ENCODE measurements at regions of chr5 and their contacts with region 1.

Region 1: GRCh38 chr5:32489791-32490582 is 45.4 kb upstream of the ZFR start:
- ATAC-seq: peak; percentile 64 to 95 (median 86)
- H3K4me3 ChIP-seq: no peak overlapping the region
- H3K27ac ChIP-seq: peak overlapping the region in 1 of 2 donors; percentile 20
- H3K4me1 ChIP-seq: no peaks in the 10 kb centered on the region

Region 2: DNA sequence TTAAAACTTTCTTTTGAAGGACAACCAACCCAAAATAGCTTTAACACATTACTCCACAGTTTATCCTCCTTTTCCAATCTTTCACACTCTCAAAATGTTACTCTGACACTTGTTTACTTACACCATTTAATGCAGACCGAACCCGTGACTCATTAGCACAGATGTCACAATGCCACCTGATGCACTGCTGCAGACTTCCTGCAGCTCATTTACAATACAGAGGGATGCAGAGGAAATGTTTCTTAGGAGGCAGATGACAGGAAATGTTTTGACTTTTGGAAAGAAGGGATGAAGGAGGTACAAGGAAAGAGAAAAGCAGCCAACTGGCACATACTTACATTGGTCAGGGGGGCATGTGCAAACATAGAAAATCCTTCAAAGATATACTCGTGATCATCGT is 997.1 kb before region 1 on chr5:
- in situ Hi-C with region 1: no loop called
- ATAC-seq: peak in 2 of 8 experiments; percentile 67 to 78
- H3K4me3 ChIP-seq: no peak overlapping the region
- H3K27ac ChIP-seq: no peak overlapping the region
- H3K4me1 ChIP-seq: no peaks in the 10 kb centered on the region

Region 3: GRCh38 chr5:31965227-31965626 is 524.8 kb before region 1 on chr5:
- in situ Hi-C with region 1: no loop called
- ATAC-seq: no peak
- H3K4me3 ChIP-seq: no peak overlapping the region
- H3K27ac ChIP-seq: no peak overlapping the region
- H3K4me1 ChIP-seq: peaks cover 2 to 3% of the 10 kb centered on the region in 2 donors

Region 4: GRCh38 chr5:32585446-32586275 is 95.7 kb after region 1 on chr5 and contains the start of gene SUB1:
- in situ Hi-C with region 1: loop called in 8 of 9 experiments (anchors 10 to 25 kb)
- ATAC-seq: peak; percentile 55 to 93 (median 90)
- H3K4me3 ChIP-seq: peak within 1 kb of the TSS; percentile 80 to 98 (median 91)
- H3K27ac ChIP-seq: peak within 1 kb of the TSS; percentile 95 to 98
- H3K4me1 ChIP-seq: peaks cover 0 to 10% of the 10 kb centered on the region in 2 donors
- total RNA-seq, gene SUB1: 123 to 587 (median 214) TPM

Region 5: DNA sequence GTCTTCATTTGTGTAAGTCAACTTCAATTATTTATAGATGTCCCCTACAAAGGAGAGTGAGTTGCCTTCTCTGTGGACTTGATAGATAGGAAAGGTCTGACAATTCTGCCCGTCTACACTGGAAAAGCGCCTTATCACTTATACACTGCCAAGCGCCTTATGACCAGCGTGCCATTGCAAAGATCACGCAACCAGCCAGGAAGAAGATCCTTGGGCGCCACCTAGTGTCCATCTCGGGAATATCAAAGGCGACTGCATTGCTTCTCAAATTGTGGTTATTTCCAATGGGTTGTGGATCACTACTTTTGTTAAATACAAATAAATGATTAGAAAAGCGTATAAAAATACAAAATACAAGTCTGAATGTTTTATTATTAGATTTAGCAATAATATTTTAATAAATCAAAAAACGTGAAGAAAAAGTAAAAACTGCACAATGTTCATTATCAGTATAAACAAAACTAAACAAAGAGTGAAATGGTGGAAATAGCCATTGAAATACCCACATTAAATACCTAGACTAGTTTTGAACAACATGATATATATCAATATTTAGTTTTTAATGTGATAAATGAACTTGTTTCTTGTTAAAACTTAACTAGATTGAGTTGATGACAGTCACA is 123.2 kb after region 1 on chr5:
- in situ Hi-C with region 1: loop called in 1 of 9 experiments (anchors 25 kb)
- ATAC-seq: peak; percentile 54 to 83 (median 74)
- H3K4me3 ChIP-seq: no peak overlapping the region
- H3K27ac ChIP-seq: no peak overlapping the region
- H3K4me1 ChIP-seq: no peaks in the 10 kb centered on the region

Measured in motor neuron (in vitro differentiated cells).